ENCODE measurements at regions of chr14 and their contacts with region 1.

Region 1: GRCh38 chr14:60164712-60165546 is at the start of gene DHRS7:
- DNase-seq: peak; percentile 79
- H3K4me3 Mint-ChIP-seq: peak within 1 kb of the TSS; percentile 94
- H3K27ac Mint-ChIP-seq: peak within 1 kb of the TSS; percentile 97
- H3K4me1 Mint-ChIP-seq: peaks cover 37% of the 10 kb centered on the region
- H3K27me3 Mint-ChIP-seq: no peaks in the 10 kb centered on the region
- total RNA-seq, gene DHRS7: 70.3 to 74.7 TPM

Region 2: DNA sequence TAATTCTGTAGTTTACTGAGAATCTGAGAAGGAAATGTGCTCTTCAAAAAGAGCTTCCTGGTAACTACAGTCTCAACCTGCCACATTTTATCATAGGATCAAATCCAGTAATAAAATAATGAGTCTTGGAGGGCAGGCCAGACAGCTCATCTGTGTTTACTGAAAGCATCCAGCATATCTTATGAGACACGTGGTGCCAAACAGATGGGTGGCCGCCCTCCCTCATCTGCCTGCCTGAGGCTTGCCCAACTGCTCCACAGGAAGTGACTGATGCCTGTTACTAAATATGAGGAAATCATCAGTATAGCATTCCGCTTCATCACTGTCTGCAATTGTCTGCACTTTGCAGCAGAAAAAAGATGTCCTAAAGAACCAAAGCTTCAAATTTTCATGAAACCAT is 13.2 kb before region 1 on chr14:
- CTCF ChIA-PET with region 1: interaction called, 9 read pairs
- POLR2A ChIA-PET with region 1: interaction called, 6 read pairs
- intact Hi-C with region 1: loop called (anchors 1 kb)
- DNase-seq: peak; percentile 84
- H3K4me3 Mint-ChIP-seq: no peak overlapping the region
- H3K27ac Mint-ChIP-seq: peak overlapping the region; percentile 83
- H3K4me1 Mint-ChIP-seq: peaks cover 37% of the 10 kb centered on the region
- H3K27me3 Mint-ChIP-seq: no peaks in the 10 kb centered on the region

Region 3: GRCh38 chr14:61196792-61197191 is 1031.9 kb after region 1 on chr14:
- CTCF ChIA-PET with region 1: no interaction called
- POLR2A ChIA-PET with region 1: no interaction called
- intact Hi-C with region 1: no loop called
- DNase-seq: no peak
- H3K4me3 Mint-ChIP-seq: no peak overlapping the region
- H3K27ac Mint-ChIP-seq: no peak overlapping the region
- H3K4me1 Mint-ChIP-seq: no peaks in the 10 kb centered on the region
- H3K27me3 Mint-ChIP-seq: peaks cover 21% of the 10 kb centered on the region